Mammary epithelial cell (primary cell): ENCODE measurements at regions of chr9 and their contacts with region 1.

Region 1: GRCh38 chr9:23258569-23258968 is 567.5 kb downstream of the ELAVL2 start:
- DNase-seq: no peak
- H3K4me3 ChIP-seq: no peak overlapping the region
- H3K27ac ChIP-seq: no peak overlapping the region
- H3K4me1 ChIP-seq: no peaks in the 10 kb centered on the region
- H3K27me3 ChIP-seq: no peaks in the 10 kb centered on the region
- CTCF ChIP-seq: no peak

Region 2: DNA sequence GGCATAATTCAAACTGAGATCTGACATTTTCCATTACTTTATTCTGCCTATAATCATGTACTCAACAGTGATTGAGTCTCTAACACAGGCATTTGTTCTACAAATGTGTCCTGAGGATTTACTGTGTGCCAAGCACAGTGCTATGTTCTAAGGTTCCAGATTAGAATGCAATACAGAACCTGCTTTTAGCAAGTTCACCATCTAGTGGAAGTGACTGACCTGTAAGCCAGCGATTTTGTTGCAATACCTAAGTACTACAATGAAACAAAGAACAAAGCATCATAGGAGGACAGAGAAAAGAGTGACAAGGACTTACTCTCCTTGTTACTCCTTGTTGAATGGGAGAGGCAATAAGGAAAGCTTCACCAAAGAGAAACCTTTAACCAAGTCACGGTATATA is 219.3 kb after region 1 on chr9:
- CTCF ChIA-PET with region 1: no interaction called
- dilution Hi-C with region 1: loop called (anchors 10 kb)
- in situ Hi-C with region 1: no loop called
- intact Hi-C with region 1: no loop called
- DNase-seq: no peak
- H3K4me3 ChIP-seq: no peak overlapping the region
- H3K27ac ChIP-seq: no peak overlapping the region
- H3K4me1 ChIP-seq: no peaks in the 10 kb centered on the region
- H3K27me3 ChIP-seq: no peaks in the 10 kb centered on the region
- CTCF ChIP-seq: no peak

Region 3: GRCh38 chr9:23611869-23612268 is 353.3 kb after region 1 on chr9:
- CTCF ChIA-PET with region 1: no interaction called
- dilution Hi-C with region 1: no loop called
- in situ Hi-C with region 1: no loop called
- intact Hi-C with region 1: no loop called
- DNase-seq: no peak
- H3K4me3 ChIP-seq: no peak overlapping the region
- H3K27ac ChIP-seq: no peak overlapping the region
- H3K4me1 ChIP-seq: no peaks in the 10 kb centered on the region
- H3K27me3 ChIP-seq: no peaks in the 10 kb centered on the region
- CTCF ChIP-seq: no peak

Region 4: GRCh38 chr9:23621924-23622323 is 363.4 kb after region 1 on chr9:
- CTCF ChIA-PET with region 1: no interaction called
- dilution Hi-C with region 1: no loop called
- in situ Hi-C with region 1: no loop called
- intact Hi-C with region 1: no loop called
- DNase-seq: peak; percentile 17
- H3K4me3 ChIP-seq: no peak overlapping the region
- H3K27ac ChIP-seq: peak overlapping the region; percentile 30
- H3K4me1 ChIP-seq: peaks cover 20% of the 10 kb centered on the region
- H3K27me3 ChIP-seq: no peaks in the 10 kb centered on the region
- CTCF ChIP-seq: no peak